Activated CD8-positive, alpha-beta T cell treated with anti-CD3 and anti-CD28 coated beads for 36 hours (primary cell): ENCODE measurements at regions of chr10 and their contacts with region 1.

Region 1: DNA sequence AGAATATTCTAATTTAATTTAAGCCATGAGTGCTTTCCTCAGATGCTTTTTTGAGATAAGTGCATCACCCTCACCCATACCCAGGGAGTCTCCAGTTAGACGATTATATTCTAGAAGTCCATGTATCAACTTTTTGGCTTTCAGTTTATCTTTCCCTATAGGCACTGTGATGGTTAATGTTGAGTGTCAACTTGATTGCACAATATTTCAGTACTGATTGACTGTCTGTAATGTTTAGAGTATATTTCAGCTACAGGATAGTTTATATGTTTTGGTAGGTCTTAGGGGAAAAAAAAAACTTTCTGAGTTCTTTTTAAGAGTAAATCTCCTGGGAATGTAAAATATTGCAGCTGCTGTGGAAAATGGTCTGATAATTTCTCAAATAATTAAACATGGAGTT is 535.4 kb downstream of the ADRA2A start:
- DNase-seq: no peak
- ATAC-seq: no peak
- H3K4me3 Mint-ChIP-seq: no peak overlapping the region
- H3K27ac Mint-ChIP-seq: no peak overlapping the region
- H3K4me1 Mint-ChIP-seq: no peaks in the 10 kb centered on the region
- H3K27me3 Mint-ChIP-seq: no peaks in the 10 kb centered on the region
- CTCF ChIP-seq: no peak

Region 2: DNA sequence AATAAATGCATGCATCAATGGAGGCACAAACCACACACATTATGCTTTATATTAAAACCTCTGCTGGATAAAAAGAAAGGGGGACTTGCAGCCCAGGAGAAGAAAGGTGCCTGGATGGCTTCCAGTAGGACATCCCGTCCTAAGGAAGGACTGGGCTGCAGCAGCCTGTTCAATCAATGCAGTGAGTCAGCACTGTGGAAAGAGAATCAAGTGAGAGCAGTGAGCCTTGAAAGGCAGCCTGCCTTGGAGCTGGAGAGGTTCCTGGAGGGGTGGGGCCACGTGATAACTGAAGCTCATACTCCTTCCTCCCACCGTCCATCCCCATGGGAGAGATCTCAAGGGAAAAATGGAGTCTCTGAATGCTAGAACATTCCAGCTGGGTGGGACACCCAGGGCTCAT is 34.2 kb before region 1 on chr10:
- CTCF ChIA-PET with region 1: no interaction called
- POLR2A ChIA-PET with region 1: no interaction called
- intact Hi-C with region 1: no loop called
- DNase-seq: no peak
- ATAC-seq: no peak
- H3K4me3 Mint-ChIP-seq: no peak overlapping the region
- H3K27ac Mint-ChIP-seq: no peak overlapping the region
- H3K4me1 Mint-ChIP-seq: no peaks in the 10 kb centered on the region
- H3K27me3 Mint-ChIP-seq: peaks cover 6% of the 10 kb centered on the region
- CTCF ChIP-seq: no peak

Region 3: GRCh38 chr10:111598436-111599059 is 13.7 kb before region 1 on chr10:
- CTCF ChIA-PET with region 1: interaction called, 14 read pairs
- POLR2A ChIA-PET with region 1: no interaction called
- intact Hi-C with region 1: no loop called
- DNase-seq: peak; percentile 58
- ATAC-seq: peak; percentile 53
- H3K4me3 Mint-ChIP-seq: no peak overlapping the region
- H3K27ac Mint-ChIP-seq: no peak overlapping the region
- H3K4me1 Mint-ChIP-seq: no peaks in the 10 kb centered on the region
- H3K27me3 Mint-ChIP-seq: peaks cover 3% of the 10 kb centered on the region
- CTCF ChIP-seq: peak; percentile 79

Region 4: GRCh38 chr10:111648046-111648445 is 35.8 kb after region 1 on chr10:
- CTCF ChIA-PET with region 1: no interaction called
- POLR2A ChIA-PET with region 1: no interaction called
- intact Hi-C with region 1: no loop called
- DNase-seq: no peak
- ATAC-seq: no peak
- H3K4me3 Mint-ChIP-seq: no peak overlapping the region
- H3K27ac Mint-ChIP-seq: no peak overlapping the region
- H3K4me1 Mint-ChIP-seq: no peaks in the 10 kb centered on the region
- H3K27me3 Mint-ChIP-seq: peaks cover 2% of the 10 kb centered on the region
- CTCF ChIP-seq: no peak